ENCODE measurements at regions of chr16 and their contacts with region 1.

Region 1: DNA sequence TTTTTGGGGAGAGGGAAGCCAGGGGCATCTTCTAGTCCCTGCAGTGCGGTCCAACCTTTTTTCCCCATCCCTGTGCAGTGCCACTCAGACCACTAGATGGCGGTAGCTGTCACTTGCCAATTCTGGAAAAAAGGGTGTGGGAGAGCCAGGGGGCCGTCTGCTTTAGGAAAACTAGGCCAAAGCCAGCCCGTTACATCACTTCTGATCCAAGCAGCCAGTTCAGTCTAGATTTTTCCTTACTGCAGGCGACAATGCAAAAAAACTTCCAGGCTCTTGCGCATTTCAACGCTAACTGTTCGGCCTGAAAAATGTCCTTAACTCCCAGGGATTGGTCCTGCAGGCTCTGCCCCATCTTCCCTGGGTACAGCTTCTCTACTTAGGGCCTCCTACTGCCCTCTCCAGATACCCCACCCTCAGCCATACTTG is 69.2 kb upstream of the CES5A start:
- DNase-seq: peak; percentile 36 to 46
- ATAC-seq: peak; percentile 82 to 95; a peak in 5 of 6 replicates
- H3K4me3 ChIP-seq: no peak overlapping the region
- H3K27ac ChIP-seq: no peak overlapping the region
- H3K4me1 ChIP-seq: no peaks in the 10 kb centered on the region
- CTCF ChIP-seq: peak; percentile 77
- EP300 ChIP-seq: no peak
- POLR2A ChIP-seq: no peak
- RAD21 ChIP-seq: peak; percentile 57 to 75

Region 2: GRCh38 chr16:55933038-55933437 is 11.4 kb before region 1 on chr16:
- CTCF ChIA-PET with region 1: interaction called, 21 read pairs
- POLR2A ChIA-PET with region 1: no interaction called
- DNase-seq: peak in 1 of 2 experiments; percentile 10
- ATAC-seq: no peak
- H3K4me3 ChIP-seq: no peak overlapping the region
- H3K27ac ChIP-seq: no peak overlapping the region
- H3K4me1 ChIP-seq: no peaks in the 10 kb centered on the region
- CTCF ChIP-seq: no peak
- EP300 ChIP-seq: no peak
- POLR2A ChIP-seq: no peak
- RAD21 ChIP-seq: no peak

Region 3: GRCh38 chr16:55964923-55965498 is 20.6 kb after region 1 on chr16:
- CTCF ChIA-PET with region 1: interaction called, 51 read pairs
- POLR2A ChIA-PET with region 1: no interaction called
- DNase-seq: no peak
- ATAC-seq: no peak
- H3K4me3 ChIP-seq: no peak overlapping the region
- H3K27ac ChIP-seq: no peak overlapping the region
- H3K4me1 ChIP-seq: no peaks in the 10 kb centered on the region
- CTCF ChIP-seq: no peak
- EP300 ChIP-seq: no peak
- POLR2A ChIP-seq: no peak
- RAD21 ChIP-seq: no peak

Region 4: GRCh38 chr16:56068314-56068713 is 123.9 kb after region 1 on chr16:
- CTCF ChIA-PET with region 1: no interaction called
- POLR2A ChIA-PET with region 1: no interaction called
- DNase-seq: no peak
- ATAC-seq: no peak
- H3K4me3 ChIP-seq: no peak overlapping the region
- H3K27ac ChIP-seq: no peak overlapping the region
- H3K4me1 ChIP-seq: no peaks in the 10 kb centered on the region
- CTCF ChIP-seq: no peak
- EP300 ChIP-seq: no peak
- POLR2A ChIP-seq: no peak
- RAD21 ChIP-seq: no peak

Region 5: GRCh38 chr16:56281256-56281805 is 336.9 kb after region 1 on chr16:
- CTCF ChIA-PET with region 1: interaction called, 23 read pairs
- POLR2A ChIA-PET with region 1: no interaction called
- DNase-seq: peak in 1 of 2 experiments; percentile 36
- ATAC-seq: peak in 1 of 2 experiments; percentile 80; a peak in 3 of 6 replicates
- H3K4me3 ChIP-seq: no peak overlapping the region
- H3K27ac ChIP-seq: no peak overlapping the region
- H3K4me1 ChIP-seq: no peaks in the 10 kb centered on the region
- CTCF ChIP-seq: peak; percentile 30; the same call in 2 of the 3 replicates
- EP300 ChIP-seq: no peak
- POLR2A ChIP-seq: no peak
- RAD21 ChIP-seq: peak in 1 of 2 experiments; percentile 28; a peak in 2 of 5 replicates